ENCODE measurements at regions of chr16 and their contacts with region 1.

Region 1: DNA sequence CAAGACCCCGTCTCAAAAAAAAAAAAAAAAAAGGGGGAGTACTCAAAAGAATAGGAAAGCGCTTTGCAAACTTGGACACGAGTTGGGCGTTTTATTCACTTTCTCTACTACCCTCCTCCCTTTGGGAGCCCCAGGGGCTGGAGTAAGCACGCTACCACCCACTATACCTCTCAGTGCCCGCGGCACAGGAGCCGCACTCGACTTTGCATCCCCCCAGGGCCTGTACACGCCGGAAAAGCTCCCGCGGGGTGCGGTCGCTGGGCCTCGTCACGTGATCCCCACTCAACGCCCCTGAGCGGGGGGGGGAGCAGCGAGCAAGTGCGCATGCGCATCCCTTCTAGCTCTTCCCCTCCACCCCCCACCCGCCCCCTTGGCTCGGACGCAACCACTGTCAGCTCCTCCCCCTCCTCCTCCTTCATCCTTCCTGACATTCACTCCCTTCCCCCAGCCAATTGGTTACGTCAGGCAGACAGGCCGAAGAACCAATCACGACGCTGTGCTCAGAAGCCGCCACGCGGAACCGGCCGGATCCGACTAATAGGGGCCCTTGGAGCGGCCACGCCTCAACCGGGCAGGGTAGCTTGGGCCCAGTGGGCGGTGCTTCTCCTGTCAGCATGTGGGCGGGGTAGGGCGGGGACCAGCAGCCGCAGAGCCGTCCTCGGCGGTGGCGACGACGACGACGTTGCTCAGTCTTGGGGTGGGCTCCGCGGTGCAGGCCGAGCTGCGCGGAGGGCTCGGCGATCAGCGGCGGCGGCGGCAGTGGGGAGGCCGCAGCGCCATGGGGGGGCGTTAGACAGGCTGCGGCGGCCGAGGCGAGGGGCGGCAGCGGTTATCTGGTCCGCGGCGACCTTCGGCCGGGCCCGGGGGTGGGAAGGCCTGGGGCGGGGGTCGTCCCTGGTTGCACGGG is at the start of gene HAPSTR1:
- DNase-seq: peak; percentile 100
- H3K4me3 Mint-ChIP-seq: peak within 1 kb of the TSS; percentile 87
- H3K27ac Mint-ChIP-seq: peak within 1 kb of the TSS; percentile 95
- H3K4me1 Mint-ChIP-seq: peaks cover 30% of the 10 kb centered on the region
- H3K27me3 Mint-ChIP-seq: no peaks in the 10 kb centered on the region
- CTCF ChIP-seq: no peak
- total RNA-seq, gene HAPSTR1: 87.4 and 88.9 TPM in 2 replicates

Region 2: GRCh38 chr16:8828541-8829165 is 262.6 kb before region 1 on chr16:
- CTCF ChIA-PET with region 1: no interaction called
- POLR2A ChIA-PET with region 1: no interaction called
- intact Hi-C with region 1: no loop called
- DNase-seq: peak; percentile 67
- H3K4me3 Mint-ChIP-seq: no peak overlapping the region
- H3K27ac Mint-ChIP-seq: peak overlapping the region; percentile 51
- H3K4me1 Mint-ChIP-seq: peaks cover 10% of the 10 kb centered on the region
- H3K27me3 Mint-ChIP-seq: no peaks in the 10 kb centered on the region
- CTCF ChIP-seq: no peak

Region 3: DNA sequence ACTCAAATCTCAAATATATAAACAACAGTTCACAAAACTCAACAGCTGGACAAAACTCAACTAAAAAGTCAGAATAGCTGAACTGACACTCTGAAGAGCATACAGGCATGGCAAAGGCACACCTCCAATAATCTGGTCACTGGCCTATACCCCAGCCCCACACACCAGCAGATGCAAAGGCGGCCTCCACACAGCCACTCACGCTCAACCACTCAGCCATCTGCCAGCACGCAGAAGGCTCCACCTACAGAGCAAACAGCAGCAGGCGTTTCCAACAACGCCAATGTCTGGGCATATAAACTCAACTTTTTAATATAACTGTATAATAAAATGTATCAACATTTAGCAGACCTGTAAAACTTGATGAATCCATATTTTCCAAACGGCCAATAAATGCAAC is 144.7 kb before region 1 on chr16:
- CTCF ChIA-PET with region 1: no interaction called
- POLR2A ChIA-PET with region 1: no interaction called
- intact Hi-C with region 1: no loop called
- DNase-seq: no peak
- H3K4me3 Mint-ChIP-seq: no peak overlapping the region
- H3K27ac Mint-ChIP-seq: no peak overlapping the region
- H3K4me1 Mint-ChIP-seq: peaks cover 18% of the 10 kb centered on the region
- H3K27me3 Mint-ChIP-seq: no peaks in the 10 kb centered on the region
- CTCF ChIP-seq: no peak

Region 4: DNA sequence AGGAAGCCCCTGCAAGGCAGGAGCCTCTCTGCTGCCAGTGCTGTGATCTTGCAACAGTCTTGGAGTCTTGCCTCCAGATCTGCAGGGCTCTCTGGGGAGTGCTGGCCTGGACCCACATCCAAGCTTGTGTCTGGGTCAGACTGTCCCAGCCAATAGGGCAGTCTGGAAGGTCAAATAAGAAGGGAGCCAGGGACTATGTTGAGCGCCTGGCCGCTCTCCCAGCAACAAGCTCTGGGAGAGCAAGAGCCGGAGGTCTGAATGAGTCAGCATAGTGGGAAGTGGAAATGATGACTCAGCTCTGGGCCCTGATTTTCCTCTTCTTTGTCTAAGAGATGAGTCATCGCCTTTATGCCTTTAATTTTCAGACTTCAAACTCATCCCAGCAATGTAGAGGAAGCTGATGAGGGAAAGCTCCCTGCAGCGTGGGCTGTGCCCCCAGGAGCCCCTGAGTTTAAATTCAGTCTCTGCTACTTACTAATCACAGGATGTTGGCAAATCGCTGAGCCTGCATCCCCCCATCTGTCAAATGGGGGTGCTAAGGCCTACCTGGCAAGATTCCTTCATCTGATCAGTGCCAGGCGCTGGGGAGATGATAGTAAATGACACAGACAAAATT is 43.4 kb before region 1 on chr16:
- CTCF ChIA-PET with region 1: no interaction called
- POLR2A ChIA-PET with region 1: interaction called, 9 read pairs
- intact Hi-C with region 1: loop called (anchors 1 kb)
- DNase-seq: peak; percentile 99
- H3K4me3 Mint-ChIP-seq: no peak overlapping the region
- H3K27ac Mint-ChIP-seq: peak overlapping the region; percentile 72
- H3K4me1 Mint-ChIP-seq: peaks cover 15% of the 10 kb centered on the region
- H3K27me3 Mint-ChIP-seq: no peaks in the 10 kb centered on the region
- CTCF ChIP-seq: no peak

Region 5: GRCh38 chr16:9072806-9073341 is 18.3 kb before region 1 on chr16:
- CTCF ChIA-PET with region 1: interaction called, 4 read pairs
- POLR2A ChIA-PET with region 1: interaction called, 63 read pairs
- intact Hi-C with region 1: loop called (anchors 1 kb)
- DNase-seq: peak; percentile 85
- H3K4me3 Mint-ChIP-seq: peak overlapping the region; percentile 23
- H3K27ac Mint-ChIP-seq: peak overlapping the region; percentile 93
- H3K4me1 Mint-ChIP-seq: peaks cover 32% of the 10 kb centered on the region
- H3K27me3 Mint-ChIP-seq: no peaks in the 10 kb centered on the region
- CTCF ChIP-seq: no peak

Region 6: GRCh38 chr16:9102379-9102778 is 11.2 kb after region 1 on chr16:
- CTCF ChIA-PET with region 1: interaction called, 8 read pairs
- POLR2A ChIA-PET with region 1: interaction called, 41 read pairs
- intact Hi-C with region 1: no loop called
- DNase-seq: no peak
- H3K4me3 Mint-ChIP-seq: no peak overlapping the region
- H3K27ac Mint-ChIP-seq: peak overlapping the region; percentile 64
- H3K4me1 Mint-ChIP-seq: peaks cover 37% of the 10 kb centered on the region
- H3K27me3 Mint-ChIP-seq: no peaks in the 10 kb centered on the region
- CTCF ChIP-seq: no peak

Region 7: GRCh38 chr16:9124908-9125584 is 33.8 kb after region 1 on chr16:
- CTCF ChIA-PET with region 1: no interaction called
- POLR2A ChIA-PET with region 1: interaction called, 4 read pairs
- intact Hi-C with region 1: loop called (anchors 5 kb)
- DNase-seq: no peak
- H3K4me3 Mint-ChIP-seq: no peak overlapping the region
- H3K27ac Mint-ChIP-seq: no peak overlapping the region
- H3K4me1 Mint-ChIP-seq: peaks cover 12% of the 10 kb centered on the region
- H3K27me3 Mint-ChIP-seq: no peaks in the 10 kb centered on the region
- CTCF ChIP-seq: no peak